ENCODE measurements at regions of chr3 and their contacts with region 1.

Region 1: GRCh38 chr3:11379233-11379823 is 107.1 kb downstream of the ATG7 start:
- DNase-seq: no peak
- H3K4me3 ChIP-seq: no peak overlapping the region
- H3K27ac ChIP-seq: no peak overlapping the region
- H3K27me3 ChIP-seq: no peaks in the 10 kb centered on the region
- CTCF ChIP-seq: peak; percentile 62

Region 2: GRCh38 chr3:11367143-11367693 is 12.1 kb before region 1 on chr3:
- CTCF ChIA-PET with region 1: interaction called, 15 read pairs
- POLR2A ChIA-PET with region 1: interaction called, 3 read pairs
- DNase-seq: no peak
- H3K4me3 ChIP-seq: no peak overlapping the region
- H3K27ac ChIP-seq: no peak overlapping the region
- H3K27me3 ChIP-seq: no peaks in the 10 kb centered on the region
- CTCF ChIP-seq: no peak

Region 3: DNA sequence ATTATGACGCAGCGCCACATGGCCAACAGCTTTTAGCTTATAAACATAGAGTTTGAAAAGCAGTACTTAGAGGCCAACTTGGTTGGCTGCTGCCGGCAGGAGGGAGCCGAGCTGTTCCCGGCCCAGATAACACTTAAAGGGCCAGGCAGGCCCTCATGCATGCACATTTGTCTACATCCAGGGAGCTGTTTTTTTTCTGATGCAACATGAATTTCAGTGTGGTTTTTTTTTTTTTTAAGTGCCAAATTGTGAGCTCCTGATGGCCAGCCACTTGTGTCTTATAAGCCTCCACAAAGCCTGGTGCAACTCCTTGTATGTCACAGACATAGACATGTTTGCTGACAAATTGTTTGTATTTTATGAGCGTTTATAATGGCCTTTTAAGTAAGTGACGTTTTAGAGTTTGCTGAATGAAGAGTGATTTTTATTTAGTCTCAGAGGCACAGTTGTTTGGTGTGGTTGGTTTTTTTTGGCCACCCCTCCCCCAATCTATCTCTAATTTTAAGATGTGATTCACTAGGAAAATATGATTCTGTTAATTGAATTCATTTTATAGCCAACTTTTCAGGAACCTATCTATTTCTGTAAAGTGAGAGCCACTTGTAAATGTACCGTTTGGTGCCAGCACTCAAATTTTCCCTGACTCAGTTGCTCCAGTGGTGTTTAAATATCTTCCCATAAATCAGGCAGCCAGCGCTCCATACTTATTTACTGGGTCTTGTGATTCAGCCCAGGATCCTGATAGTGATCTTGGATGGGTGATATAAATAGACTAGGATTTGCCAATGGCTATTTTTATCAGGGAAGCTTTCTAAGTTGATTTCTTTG is 130.1 kb after region 1 on chr3:
- CTCF ChIA-PET with region 1: interaction called, 16 read pairs
- POLR2A ChIA-PET with region 1: no interaction called
- DNase-seq: peak; percentile 93
- H3K4me3 ChIP-seq: no peak overlapping the region
- H3K27ac ChIP-seq: peak overlapping the region; percentile 87
- H3K27me3 ChIP-seq: no peaks in the 10 kb centered on the region
- CTCF ChIP-seq: peak; percentile 40

Region 4: GRCh38 chr3:11643605-11644087 is 264.3 kb after region 1 on chr3 and contains the start of gene VGLL4:
- CTCF ChIA-PET with region 1: interaction called, 153 read pairs
- POLR2A ChIA-PET with region 1: interaction called, 4 read pairs
- DNase-seq: peak; percentile 84
- H3K4me3 ChIP-seq: peak within 1 kb of the TSS; percentile 94
- H3K27ac ChIP-seq: peak within 1 kb of the TSS; percentile 96
- H3K27me3 ChIP-seq: no peaks in the 10 kb centered on the region
- CTCF ChIP-seq: peak; percentile 20; the same call in 1 of the 2 replicates
- polyA plus RNA-seq, gene VGLL4: 27.6 and 30.5 TPM in 2 replicates

Region 5: GRCh38 chr3:11779626-11780025 is 400.3 kb after region 1 on chr3:
- CTCF ChIA-PET with region 1: no interaction called
- POLR2A ChIA-PET with region 1: no interaction called
- DNase-seq: no peak
- H3K4me3 ChIP-seq: no peak overlapping the region
- H3K27ac ChIP-seq: no peak overlapping the region
- H3K27me3 ChIP-seq: no peaks in the 10 kb centered on the region
- CTCF ChIP-seq: no peak

Region 6: DNA sequence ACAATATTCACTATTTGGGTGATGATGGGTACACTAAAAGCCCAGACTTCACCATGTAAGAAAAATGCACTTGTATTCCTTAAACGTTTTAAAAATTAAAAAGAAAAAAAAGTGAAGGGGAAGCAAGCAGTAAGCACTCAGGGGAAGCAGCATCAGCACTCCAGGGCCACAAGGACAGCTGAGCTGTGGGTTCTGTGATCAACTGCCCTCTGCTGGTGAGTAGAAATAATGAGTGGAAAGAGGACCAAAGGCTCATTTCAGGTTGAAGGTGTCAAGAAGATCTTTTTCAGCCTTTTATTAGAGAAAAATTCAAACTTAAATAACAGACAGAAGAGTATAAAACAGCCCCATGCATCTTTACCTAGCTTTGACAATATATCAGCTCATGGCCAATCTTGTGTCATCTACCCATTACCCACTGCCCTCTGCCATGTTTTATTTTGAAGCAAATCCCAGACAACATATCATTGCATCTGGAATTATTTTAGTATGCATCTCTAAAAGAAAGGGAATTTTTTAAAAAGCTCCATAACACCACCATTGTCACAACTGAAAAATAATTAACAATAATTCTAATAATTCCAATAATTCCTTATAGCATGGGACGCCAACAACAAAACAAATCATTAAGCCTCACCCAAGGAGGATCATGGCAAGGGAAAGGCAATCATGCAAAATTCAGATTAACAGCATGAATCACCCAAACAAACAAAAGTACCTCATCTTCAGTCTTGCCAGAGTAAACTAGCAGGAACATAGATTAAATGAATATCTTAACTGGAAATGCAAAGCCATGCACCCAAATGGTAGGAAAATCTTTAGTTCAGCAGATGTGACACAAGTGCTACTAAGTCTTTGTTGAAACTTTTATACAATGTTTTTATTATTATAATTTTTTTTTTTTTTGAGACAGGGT is 424.9 kb after region 1 on chr3:
- CTCF ChIA-PET with region 1: interaction called, 35 read pairs
- POLR2A ChIA-PET with region 1: no interaction called
- DNase-seq: no peak
- H3K4me3 ChIP-seq: no peak overlapping the region
- H3K27ac ChIP-seq: no peak overlapping the region
- H3K27me3 ChIP-seq: no peaks in the 10 kb centered on the region
- CTCF ChIP-seq: peak; percentile 76

Region 7: GRCh38 chr3:11835028-11835639 is 455.8 kb after region 1 on chr3:
- CTCF ChIA-PET with region 1: interaction called, 17 read pairs
- POLR2A ChIA-PET with region 1: no interaction called
- DNase-seq: no peak
- H3K4me3 ChIP-seq: no peak overlapping the region
- H3K27ac ChIP-seq: no peak overlapping the region
- H3K27me3 ChIP-seq: no peaks in the 10 kb centered on the region
- CTCF ChIP-seq: peak; percentile 56

Measured in AG04450 (cell line).